Posterior vena cava (tissue), 2 donors: ENCODE measurements at regions of chr2 and their contacts with region 1.

Region 1: GRCh38 chr2:8281950-8282857 is 399.7 kb upstream of the ID2 start:
- DNase-seq: no peak

Region 2: GRCh38 chr2:8252997-8253694 is 29.1 kb before region 1 on chr2:
- intact Hi-C with region 1: loop called in 1 of 2 experiments (anchors 1 kb)
- DNase-seq: no peak

Region 3: DNA sequence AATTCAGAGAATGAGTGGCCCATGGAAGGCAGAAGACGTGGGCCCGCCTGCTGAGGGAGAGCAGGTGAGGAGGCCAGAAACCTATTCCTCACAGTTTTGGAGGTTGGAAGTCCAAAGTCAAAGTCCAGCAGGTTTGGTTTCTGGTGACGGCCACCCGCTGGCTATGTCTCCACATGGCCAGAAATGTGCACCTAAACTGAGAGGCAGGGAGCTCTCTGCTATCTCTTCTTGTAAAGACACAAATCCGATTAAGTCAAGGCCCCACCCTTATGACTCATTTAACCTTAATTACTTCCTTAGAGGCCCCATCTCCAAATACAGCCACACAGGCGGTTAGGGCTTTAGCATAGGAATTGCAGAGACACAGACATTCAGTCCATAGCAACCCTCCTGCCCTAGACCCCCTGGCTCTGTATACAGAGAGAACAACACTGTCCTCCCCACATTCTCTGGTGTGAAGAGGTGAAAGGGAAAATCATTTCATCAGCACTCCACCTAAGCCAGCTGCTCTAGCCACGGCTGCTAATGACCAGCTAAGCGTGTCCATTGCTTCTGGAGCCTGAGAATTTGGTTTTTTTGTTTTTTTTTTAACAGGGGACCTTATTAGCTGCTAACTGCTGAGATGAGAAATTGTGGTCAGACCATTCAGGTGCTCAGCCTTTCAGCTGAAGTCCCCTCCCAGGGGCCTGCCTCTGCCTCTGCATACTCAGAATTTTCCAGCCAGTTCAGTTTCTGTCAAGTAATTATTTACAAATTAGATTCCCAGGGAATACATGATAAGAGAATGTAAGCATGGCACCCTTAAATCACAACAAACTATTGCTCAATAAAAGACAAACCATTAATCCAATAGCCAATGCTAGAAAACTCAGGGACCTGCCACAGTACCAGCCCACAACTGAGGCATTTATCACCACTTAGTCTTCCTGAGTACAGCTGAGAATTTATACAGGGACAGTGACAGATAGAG is 30.9 kb after region 1 on chr2:
- intact Hi-C with region 1: no loop called
- DNase-seq: no peak